H1 (cell line): ENCODE measurements at regions of chr9 and their contacts with region 1.

Region 1: GRCh38 chr9:69549310-69550202 is 122.6 kb downstream of the APBA1 start:
- DNase-seq: no peak
- H3K4me3 ChIP-seq: no peak overlapping the region
- H3K27ac ChIP-seq: no peak overlapping the region
- H3K4me1 ChIP-seq: peaks cover 0 to 3% (median 0%) of the 10 kb centered on the region in 4 experiments; a peak in 1 of 7 replicates
- H3K27me3 ChIP-seq: no peaks in the 10 kb centered on the region; a peak in 1 of 7 replicates
- CTCF ChIP-seq: peak; percentile 49 to 83 (median 75)
- EP300 ChIP-seq: no peak
- POLR2A ChIP-seq: no peak
- RAD21 ChIP-seq: peak; percentile 90 to 91

Region 2: DNA sequence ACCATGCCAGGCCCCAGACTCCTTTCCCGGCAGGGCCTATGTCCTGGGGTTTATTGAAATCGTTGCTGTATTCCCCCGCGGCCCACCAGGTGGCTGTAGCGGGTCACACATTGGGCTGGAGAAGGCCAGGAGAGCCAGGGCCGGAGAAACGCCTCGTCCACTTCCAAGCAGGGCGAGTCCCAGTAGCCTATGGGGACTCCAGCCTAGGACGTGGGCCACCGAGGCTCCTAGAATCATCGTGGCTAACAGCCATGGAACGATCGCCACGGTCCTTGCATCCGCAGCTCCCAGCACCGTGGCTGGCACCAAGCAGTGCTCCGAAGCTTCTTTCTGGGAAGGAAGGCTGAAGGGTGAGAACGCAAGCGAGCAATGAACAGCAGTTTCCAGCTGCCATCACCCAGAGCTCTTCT is 136.8 kb before region 1 on chr9:
- CTCF ChIA-PET with region 1: interaction called, 14 read pairs
- POLR2A ChIA-PET with region 1: no interaction called
- DNase-seq: peak; percentile 70 to 88
- H3K4me3 ChIP-seq: no peak overlapping the region; a peak in 1 of 8 replicates
- H3K27ac ChIP-seq: no peak overlapping the region
- H3K4me1 ChIP-seq: peaks cover 0 to 7% (median 3%) of the 10 kb centered on the region in 4 experiments; a peak in 5 of 7 replicates
- H3K27me3 ChIP-seq: no peaks in the 10 kb centered on the region; a peak in 1 of 7 replicates
- CTCF ChIP-seq: peak; percentile 73 to 81 (median 81)
- EP300 ChIP-seq: no peak
- POLR2A ChIP-seq: no peak
- RAD21 ChIP-seq: peak; percentile 79 to 93

Region 3: GRCh38 chr9:69444021-69444420 is 105.5 kb before region 1 on chr9:
- CTCF ChIA-PET with region 1: interaction called, 14 read pairs
- POLR2A ChIA-PET with region 1: no interaction called
- DNase-seq: no peak
- H3K4me3 ChIP-seq: no peak overlapping the region
- H3K27ac ChIP-seq: no peak overlapping the region
- H3K4me1 ChIP-seq: no peaks in the 10 kb centered on the region; a peak in 2 of 7 replicates
- H3K27me3 ChIP-seq: no peaks in the 10 kb centered on the region
- CTCF ChIP-seq: no peak
- EP300 ChIP-seq: no peak
- POLR2A ChIP-seq: no peak
- RAD21 ChIP-seq: no peak